ENCODE measurements at regions of chr13 and their contacts with region 1.

Region 1: DNA sequence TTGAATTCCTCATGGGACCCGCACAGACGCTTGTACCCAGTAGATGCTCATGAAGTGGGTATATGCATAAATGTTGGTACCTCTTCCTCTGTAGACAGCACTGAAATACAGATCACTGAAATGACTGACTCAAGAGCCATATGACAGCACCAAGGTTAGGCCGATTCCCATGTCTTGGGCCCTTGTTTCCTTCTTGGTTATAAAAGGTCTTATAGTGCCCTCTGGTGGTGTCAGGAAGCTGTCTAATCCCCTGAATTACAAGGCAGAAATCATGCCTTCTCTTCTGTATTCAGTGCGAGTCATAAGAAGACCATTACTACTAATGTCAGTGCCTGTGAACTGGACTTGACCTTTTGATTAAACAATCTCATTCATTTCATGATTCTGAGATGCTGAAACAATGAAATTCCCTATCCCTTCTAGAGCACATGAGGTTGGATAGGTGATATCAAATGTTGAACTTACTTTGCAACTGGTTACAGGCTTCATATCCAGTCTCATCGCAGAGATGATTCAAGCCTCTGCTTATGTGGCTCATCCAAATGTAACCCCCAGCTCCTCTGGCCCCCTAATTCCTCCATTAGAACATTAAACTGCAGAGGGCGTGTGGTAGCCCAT is 59.7 kb downstream of the SPATA13 start:
- DNase-seq: peak; percentile 69
- CTCF ChIP-seq: peak; percentile 61

Region 2: GRCh38 chr13:23915308-23915707 is 304.9 kb before region 1 on chr13:
- in situ Hi-C with region 1: loop called (anchors 10 kb)
- DNase-seq: no peak
- CTCF ChIP-seq: no peak

Region 3: DNA sequence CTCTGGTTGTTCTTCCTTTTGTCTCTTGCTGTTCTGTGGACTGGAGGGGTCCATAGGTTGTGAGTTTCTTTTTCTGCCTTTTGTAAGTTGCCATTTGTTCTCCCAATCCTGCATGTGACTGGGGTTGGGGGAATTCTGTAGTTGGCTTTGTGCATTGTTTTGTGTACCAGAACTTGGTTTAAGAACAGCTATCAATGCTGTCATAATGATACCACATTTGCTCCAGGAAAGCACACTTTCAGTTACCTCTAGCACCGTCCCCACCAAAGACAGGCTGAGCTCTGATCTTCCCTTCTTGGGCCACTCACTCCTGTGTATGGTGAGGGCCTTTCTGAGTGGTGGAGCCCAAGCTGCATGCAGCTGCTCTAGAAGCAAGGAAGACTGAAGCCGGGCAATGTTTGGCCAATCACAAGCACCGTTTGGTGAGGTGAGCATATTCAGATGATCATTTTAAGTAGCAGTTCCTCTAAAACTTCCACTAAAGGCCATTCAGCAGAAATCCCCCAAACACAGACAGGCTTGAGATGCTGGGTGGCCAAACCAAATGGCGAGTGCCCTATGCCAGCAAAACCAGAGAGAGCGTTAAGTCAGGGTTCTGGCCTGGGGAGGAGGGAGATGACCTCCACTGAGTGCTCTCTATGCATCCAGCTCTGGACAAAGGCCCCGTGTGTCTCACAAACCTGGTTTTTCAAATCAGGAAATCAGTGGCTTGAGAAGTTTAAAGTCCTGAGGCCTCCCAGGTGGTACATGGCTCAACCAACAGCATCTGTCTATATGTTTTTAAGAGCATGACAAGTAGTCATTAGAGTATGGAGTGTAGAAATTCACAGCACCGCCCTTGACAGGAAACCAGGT is 180.3 kb before region 1 on chr13:
- in situ Hi-C with region 1: loop called (anchors 10 kb)
- DNase-seq: peak; percentile 44
- CTCF ChIP-seq: no peak